ENCODE measurements at regions of chr12 and their contacts with region 1.

Region 1: DNA sequence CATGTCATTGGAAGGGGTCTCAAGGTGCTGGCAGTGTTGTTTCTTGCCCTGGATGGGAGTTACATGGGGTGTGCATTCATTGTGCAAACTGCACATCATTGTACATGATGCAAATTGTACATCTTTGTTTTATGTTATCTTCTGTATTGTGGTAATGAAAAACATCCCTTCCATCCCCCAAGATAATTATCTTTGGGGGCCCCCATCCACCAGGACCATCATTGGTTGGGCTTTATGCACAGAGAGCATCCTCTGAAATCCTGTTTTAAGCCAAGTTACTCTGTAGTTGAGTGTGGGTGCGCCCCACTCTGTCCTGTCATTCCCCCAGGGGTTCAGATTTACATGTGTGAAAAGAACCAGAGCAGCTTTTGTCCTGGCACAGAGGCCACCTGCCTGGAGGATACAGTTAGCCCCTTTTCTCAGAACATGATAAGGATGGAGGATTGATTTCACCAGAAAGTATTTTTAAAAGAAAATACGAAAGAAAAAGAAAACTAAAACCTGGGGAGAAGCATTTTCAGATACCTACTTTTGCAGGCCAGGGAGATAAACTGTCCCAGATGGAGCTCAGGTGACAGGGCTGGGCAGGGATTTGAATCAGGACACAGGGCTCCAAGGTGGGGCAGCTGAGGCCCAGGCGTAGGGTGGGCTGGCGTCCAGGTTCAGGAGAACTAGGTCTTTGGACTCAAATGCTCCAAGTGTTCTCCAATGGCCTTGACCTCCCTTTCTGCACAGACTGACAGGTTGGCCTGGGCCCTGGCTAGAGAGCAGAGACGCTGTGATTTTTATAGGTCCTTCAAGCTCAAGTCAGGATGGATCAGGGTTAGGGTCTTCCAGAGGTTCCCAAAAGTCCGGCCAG is 17.2 kb downstream of the WSCD2 start:
- DNase-seq: no peak
- H3K4me3 ChIP-seq: no peak overlapping the region
- H3K27ac ChIP-seq: no peak overlapping the region
- H3K4me1 ChIP-seq: no peaks in the 10 kb centered on the region
- H3K27me3 ChIP-seq: no peaks in the 10 kb centered on the region
- CTCF ChIP-seq: no peak
- POLR2A ChIP-seq: no peak

Region 2: DNA sequence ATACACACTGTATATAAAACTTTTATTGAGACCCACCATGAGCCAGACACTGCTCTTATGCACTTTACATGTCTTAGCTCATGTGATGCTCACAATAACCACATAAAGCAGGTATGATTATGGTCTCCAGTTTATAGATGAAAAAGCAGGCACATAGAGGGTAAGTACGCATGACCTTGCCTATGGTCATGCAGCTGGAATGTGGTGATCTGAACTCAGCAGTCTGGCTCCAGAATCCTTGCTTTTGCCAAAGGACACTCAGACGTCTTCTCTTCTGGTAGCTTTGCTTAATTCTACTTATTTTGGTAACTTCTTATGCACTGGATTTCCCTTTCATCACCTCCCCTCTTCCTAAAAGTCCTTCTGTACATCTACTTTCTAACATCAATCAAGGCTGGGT is 949.6 kb before region 1 on chr12:
- intact Hi-C with region 1: loop called (anchors 5 kb)
- DNase-seq: no peak
- H3K4me3 ChIP-seq: no peak overlapping the region
- H3K27ac ChIP-seq: no peak overlapping the region
- H3K4me1 ChIP-seq: no peaks in the 10 kb centered on the region
- H3K27me3 ChIP-seq: no peaks in the 10 kb centered on the region
- CTCF ChIP-seq: no peak
- POLR2A ChIP-seq: no peak

Region 3: DNA sequence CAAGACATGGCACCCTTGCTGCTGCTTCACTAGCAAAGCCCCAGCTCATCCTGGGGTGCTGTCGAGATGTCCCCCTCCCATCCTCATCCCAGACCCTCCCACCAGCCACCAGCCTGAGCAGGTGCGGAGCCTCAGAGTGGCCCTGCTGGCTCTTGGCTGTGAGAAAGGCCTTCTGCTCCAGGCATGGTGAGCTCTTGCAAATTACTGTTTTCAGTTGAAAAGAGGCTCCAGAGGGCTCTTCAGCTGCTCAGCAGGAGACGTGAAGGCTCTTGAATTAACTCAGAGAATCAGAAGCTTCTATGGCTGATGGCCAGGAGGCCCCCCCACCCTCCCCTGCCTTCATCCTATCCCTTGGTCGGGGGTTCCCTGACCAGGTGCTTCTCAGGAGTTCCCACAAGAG is 26.9 kb after region 1 on chr12:
- intact Hi-C with region 1: no loop called
- DNase-seq: no peak
- H3K4me3 ChIP-seq: no peak overlapping the region
- H3K27ac ChIP-seq: no peak overlapping the region
- H3K4me1 ChIP-seq: no peaks in the 10 kb centered on the region
- H3K27me3 ChIP-seq: peaks cover 0 to 7% of the 10 kb centered on the region in 2 donors
- CTCF ChIP-seq: no peak
- POLR2A ChIP-seq: no peak

Region 4: DNA sequence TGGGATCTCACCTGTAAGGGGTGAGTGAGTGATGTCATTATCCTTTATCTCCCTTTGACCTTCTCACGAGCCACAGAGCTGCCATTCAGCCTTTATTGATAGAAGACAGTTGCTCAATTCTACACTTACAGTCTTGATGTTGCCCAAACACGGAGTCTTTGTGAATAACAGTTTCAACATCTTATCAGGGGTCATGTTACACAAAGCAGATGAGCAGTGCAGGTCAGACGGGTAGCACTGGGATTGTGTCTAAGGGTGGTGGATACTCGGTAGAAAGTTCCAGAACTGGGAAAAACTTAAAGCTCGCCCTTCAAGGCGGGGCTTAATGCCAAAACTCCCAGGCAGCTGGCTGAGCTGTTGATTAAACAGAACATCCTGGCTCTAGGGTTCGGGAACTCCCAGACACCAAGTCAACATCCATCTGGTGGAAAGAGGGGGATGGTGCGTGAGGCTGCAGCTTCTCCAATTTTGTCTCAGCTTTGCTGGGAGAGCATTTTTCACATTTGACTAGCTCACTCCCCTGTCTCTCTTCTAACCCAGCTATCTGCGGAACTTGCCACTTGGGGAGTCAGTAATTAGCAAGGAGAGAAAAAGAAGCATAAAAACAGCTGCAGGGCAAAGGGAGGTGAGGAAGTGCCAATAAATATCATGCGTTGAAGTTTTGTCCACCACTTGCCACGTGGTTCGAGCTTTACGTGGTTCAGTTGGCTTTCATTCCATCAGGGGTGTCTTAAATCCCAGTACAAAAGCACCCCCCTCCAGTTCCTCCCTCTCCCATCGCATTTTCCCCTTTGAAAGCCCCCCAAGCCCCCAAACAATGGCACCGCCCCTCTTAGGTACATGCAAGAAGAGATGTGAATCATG is 1131.9 kb after region 1 on chr12:
- intact Hi-C with region 1: loop called (anchors 5 kb)
- DNase-seq: no peak
- H3K4me3 ChIP-seq: no peak overlapping the region
- H3K27ac ChIP-seq: no peak overlapping the region
- H3K4me1 ChIP-seq: no peaks in the 10 kb centered on the region
- H3K27me3 ChIP-seq: no peaks in the 10 kb centered on the region
- CTCF ChIP-seq: no peak
- POLR2A ChIP-seq: no peak

Region 5: GRCh38 chr12:110109037-110109836 is 1963.0 kb after region 1 on chr12:
- intact Hi-C with region 1: no loop called
- DNase-seq: peak; percentile 66 to 87
- H3K4me3 ChIP-seq: peak overlapping the region in 2 of 3 donors; percentile 14 to 17
- H3K27ac ChIP-seq: peak overlapping the region; percentile 87
- H3K4me1 ChIP-seq: peaks cover 0 to 3% of the 10 kb centered on the region in 2 donors
- H3K27me3 ChIP-seq: no peaks in the 10 kb centered on the region
- CTCF ChIP-seq: peak; percentile 69 to 96 (median 75)
- POLR2A ChIP-seq: peak; percentile 67